ENCODE measurements at regions of chr12 and their contacts with region 1.

Region 1: GRCh38 chr12:132771126-132771838 is 9.7 kb upstream of the ANKLE2 start:
- DNase-seq: peak; percentile 71
- ATAC-seq: peak; percentile 82
- H3K4me3 Mint-ChIP-seq: peak overlapping the region; percentile 52
- H3K27ac Mint-ChIP-seq: peak overlapping the region; percentile 89
- H3K4me1 Mint-ChIP-seq: peaks cover 61% of the 10 kb centered on the region
- H3K27me3 Mint-ChIP-seq: no peaks in the 10 kb centered on the region

Region 2: GRCh38 chr12:132807295-132808092 is 36.2 kb after region 1 on chr12:
- CTCF ChIA-PET with region 1: interaction called, 3 read pairs
- POLR2A ChIA-PET with region 1: no interaction called
- intact Hi-C with region 1: loop called (anchors 2 to 5 kb)
- DNase-seq: no peak
- ATAC-seq: no peak
- H3K4me3 Mint-ChIP-seq: no peak overlapping the region
- H3K27ac Mint-ChIP-seq: no peak overlapping the region
- H3K4me1 Mint-ChIP-seq: peaks cover 25% of the 10 kb centered on the region
- H3K27me3 Mint-ChIP-seq: no peaks in the 10 kb centered on the region

Region 3: GRCh38 chr12:133145981-133146380 is 374.7 kb after region 1 on chr12:
- CTCF ChIA-PET with region 1: no interaction called
- POLR2A ChIA-PET with region 1: no interaction called
- intact Hi-C with region 1: no loop called
- DNase-seq: no peak
- ATAC-seq: no peak
- H3K4me3 Mint-ChIP-seq: no peak overlapping the region
- H3K27ac Mint-ChIP-seq: no peak overlapping the region
- H3K4me1 Mint-ChIP-seq: no peaks in the 10 kb centered on the region
- H3K27me3 Mint-ChIP-seq: no peaks in the 10 kb centered on the region

Measured in activated CD4-positive, alpha-beta T cell treated with anti-CD3 and anti-CD28 coated beads for 36 hours (primary cell).